A549 (cell line): ENCODE measurements at regions of chr9 and their contacts with region 1.

Region 1: GRCh38 chr9:36961561-36962298 is 72.3 kb downstream of the PAX5 start:
- DNase-seq: no peak
- ATAC-seq: no peak
- H3K4me3 ChIP-seq: no peak overlapping the region
- H3K27ac ChIP-seq: no peak overlapping the region
- H3K4me1 ChIP-seq: no peaks in the 10 kb centered on the region
- CTCF ChIP-seq: no peak
- EP300 ChIP-seq: no peak
- POLR2A ChIP-seq: no peak
- RAD21 ChIP-seq: no peak

Region 2: DNA sequence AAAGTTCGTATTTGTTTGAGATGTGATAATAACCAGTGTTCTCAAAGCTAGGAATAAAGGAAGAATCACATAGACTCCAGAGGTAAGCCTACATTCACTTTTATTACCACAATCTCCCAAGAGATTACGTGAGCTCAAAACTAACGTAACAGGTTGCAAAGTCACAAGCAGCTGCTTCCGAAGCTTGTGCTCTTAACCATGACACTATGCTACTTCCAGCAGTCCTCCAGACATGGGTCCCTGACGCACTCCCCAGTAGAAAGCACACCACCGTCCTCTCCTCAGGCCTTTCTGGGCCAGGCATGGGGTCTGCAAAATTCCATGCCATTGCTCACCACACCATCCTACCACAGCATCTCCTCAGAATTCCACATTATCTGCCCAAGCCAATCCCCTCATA is 12.3 kb before region 1 on chr9:
- CTCF ChIA-PET with region 1: interaction called, 12 read pairs
- POLR2A ChIA-PET with region 1: no interaction called
- DNase-seq: no peak
- ATAC-seq: no peak
- H3K4me3 ChIP-seq: no peak overlapping the region
- H3K27ac ChIP-seq: no peak overlapping the region
- H3K4me1 ChIP-seq: no peaks in the 10 kb centered on the region
- CTCF ChIP-seq: no peak
- EP300 ChIP-seq: no peak
- POLR2A ChIP-seq: no peak
- RAD21 ChIP-seq: no peak

Region 3: GRCh38 chr9:36974731-36975130 is 13.0 kb after region 1 on chr9:
- CTCF ChIA-PET with region 1: interaction called, 17 read pairs
- POLR2A ChIA-PET with region 1: no interaction called
- DNase-seq: peak in 1 of 2 experiments; percentile 27
- ATAC-seq: peak; percentile 75 to 83; a peak in 5 of 6 replicates
- H3K4me3 ChIP-seq: no peak overlapping the region
- H3K27ac ChIP-seq: no peak overlapping the region
- H3K4me1 ChIP-seq: peaks cover 14% of the 10 kb centered on the region; the same call in 2 of the 3 replicates
- CTCF ChIP-seq: peak; percentile 41; the same call in 2 of the 3 replicates
- EP300 ChIP-seq: no peak
- POLR2A ChIP-seq: no peak
- RAD21 ChIP-seq: peak; percentile 59 to 62

Region 4: DNA sequence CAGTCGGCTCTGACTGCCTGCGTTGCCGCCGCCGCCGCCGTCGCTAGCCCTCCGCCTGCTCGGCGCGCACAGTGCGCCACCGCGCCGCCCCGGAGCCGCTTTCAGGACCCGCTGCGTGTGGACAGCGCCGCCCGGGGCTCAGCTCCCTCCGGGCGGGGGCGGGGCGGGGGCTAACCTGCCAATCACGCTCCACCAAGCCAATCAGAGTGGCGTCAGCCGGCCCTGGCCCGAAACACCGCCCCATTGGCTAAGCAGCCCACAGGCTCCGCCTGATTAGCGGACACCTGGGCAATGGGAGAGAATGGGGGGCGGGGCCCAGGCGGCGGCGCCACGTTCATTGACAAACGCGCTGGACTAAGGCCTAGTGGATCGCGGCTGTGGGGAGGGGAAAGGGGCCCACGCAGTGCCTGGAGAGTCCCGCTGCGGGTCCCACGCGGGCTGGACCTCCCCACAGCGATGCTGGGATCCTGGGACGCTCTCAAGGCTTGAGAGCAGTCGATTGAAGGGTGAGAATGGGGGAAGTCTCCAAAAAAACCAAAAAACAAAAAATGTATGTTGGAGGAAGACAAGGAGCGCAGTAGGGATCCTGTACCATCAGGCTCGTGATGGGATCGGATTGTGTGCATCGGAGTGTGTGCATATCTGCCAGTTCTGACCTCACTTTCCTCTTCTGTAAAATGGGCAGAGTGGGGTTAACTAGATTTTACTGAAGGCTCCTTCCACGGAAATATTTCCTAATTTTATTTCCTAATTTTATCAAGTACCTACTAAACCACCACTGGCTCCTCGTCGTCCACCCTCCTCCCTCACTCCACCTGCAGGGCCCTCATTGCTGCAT is 66.1 kb after region 1 on chr9:
- CTCF ChIA-PET with region 1: no interaction called
- POLR2A ChIA-PET with region 1: no interaction called
- DNase-seq: peak; percentile 94 to 100
- ATAC-seq: peak; percentile 86 to 95
- H3K4me3 ChIP-seq: peak overlapping the region; percentile 40
- H3K27ac ChIP-seq: no peak overlapping the region
- H3K4me1 ChIP-seq: peaks cover 22% of the 10 kb centered on the region
- CTCF ChIP-seq: no peak
- EP300 ChIP-seq: no peak
- POLR2A ChIP-seq: no peak
- RAD21 ChIP-seq: no peak